Activated naive CD4-positive, alpha-beta T cell treated with anti-CD3 and anti-CD28 coated beads for 36 hours (primary cell): ENCODE measurements at regions of chr2 and their contacts with region 1.

Region 1: DNA sequence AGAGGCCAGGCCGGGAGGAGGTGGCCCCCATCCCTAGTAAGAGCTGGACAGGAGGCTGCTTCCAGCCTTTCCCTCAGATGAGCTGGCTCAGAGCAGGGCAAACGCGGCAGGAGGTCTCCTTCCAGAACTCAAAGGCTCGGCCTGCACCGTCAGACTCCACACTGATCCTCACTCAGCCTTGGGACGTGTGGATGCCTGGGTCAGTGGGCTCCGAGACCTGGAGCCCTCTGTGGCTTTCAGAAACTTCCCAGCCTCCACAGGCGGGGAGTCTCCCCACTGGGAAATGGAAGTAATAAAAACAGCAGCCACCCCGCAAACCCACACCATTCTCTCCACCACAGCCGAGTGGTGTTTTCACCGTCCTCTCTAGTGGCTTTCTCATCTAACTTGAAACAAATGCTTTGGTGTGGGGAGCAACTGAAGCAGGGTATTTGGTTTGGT is 54.3 kb downstream of the INPP5D start:
- DNase-seq: peak; percentile 13
- H3K4me3 Mint-ChIP-seq: no peak overlapping the region
- H3K27ac Mint-ChIP-seq: peak overlapping the region; percentile 46
- H3K4me1 Mint-ChIP-seq: peaks cover 65% of the 10 kb centered on the region
- H3K27me3 Mint-ChIP-seq: no peaks in the 10 kb centered on the region

Region 2: GRCh38 chr2:233100192-233100998 is 14.0 kb before region 1 on chr2:
- CTCF ChIA-PET with region 1: no interaction called
- intact Hi-C with region 1: loop called (anchors 2 kb)
- DNase-seq: peak; percentile 87
- H3K4me3 Mint-ChIP-seq: peak overlapping the region; percentile 32
- H3K27ac Mint-ChIP-seq: peak overlapping the region; percentile 66
- H3K4me1 Mint-ChIP-seq: peaks cover 63% of the 10 kb centered on the region
- H3K27me3 Mint-ChIP-seq: no peaks in the 10 kb centered on the region